Right ventricle myocardium inferior (tissue), 1 donor: ENCODE measurements at regions of chr18 and their contacts with region 1.

Region 1: GRCh38 chr18:63131106-63131958 is 188.2 kb downstream of the BCL2 start:
- DNase-seq: no peak
- ATAC-seq: peak; percentile 40

Region 2: DNA sequence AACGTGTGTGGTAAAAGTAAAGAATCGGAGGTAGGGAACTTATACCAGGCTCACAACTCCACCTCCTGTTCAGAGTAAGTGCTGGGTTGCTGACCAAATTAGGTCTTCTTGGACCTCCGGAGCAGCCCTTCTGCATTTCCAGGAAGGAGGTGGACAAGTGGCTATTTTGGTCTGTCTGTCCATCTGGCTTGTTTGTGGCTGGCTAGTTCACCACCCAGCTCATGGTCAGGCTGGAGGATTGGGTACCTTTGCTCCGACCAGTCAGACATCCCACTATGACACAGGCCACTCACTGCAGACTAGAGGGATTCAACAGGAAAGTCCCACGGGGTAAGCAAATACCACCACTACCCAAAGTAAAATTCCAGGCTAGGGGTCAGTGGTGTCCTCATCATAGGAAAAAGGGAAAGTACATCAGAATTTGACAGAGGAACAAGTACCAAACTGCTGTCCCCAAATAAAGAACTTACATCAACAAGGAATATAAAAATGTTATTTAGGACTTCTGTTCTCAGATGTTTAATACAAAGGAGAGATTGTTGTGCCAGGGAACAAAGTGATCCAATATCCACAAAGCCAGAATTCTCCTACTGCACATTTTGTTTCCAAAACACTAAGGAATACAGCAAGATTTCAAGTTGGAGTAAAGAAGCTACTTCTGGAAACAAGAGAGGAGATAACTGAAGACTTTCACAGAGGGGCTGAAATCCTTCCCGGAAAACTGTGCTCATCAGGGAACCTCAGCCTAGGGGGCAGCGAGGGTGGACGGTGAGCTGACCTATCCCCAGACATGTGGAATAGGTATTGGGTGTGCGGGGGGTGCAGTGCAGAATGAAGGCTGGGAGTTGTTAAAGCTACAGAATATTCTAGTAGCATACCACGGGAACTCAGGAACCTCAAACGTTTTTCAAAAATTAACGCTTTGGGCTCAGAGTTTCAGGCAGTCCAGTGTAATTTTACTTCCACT is 131.3 kb after region 1 on chr18:
- intact Hi-C with region 1: loop called (anchors 5 kb)
- DNase-seq: no peak
- ATAC-seq: peak; percentile 79

Region 3: GRCh38 chr18:63422087-63422809 is 290.9 kb after region 1 on chr18 and contains the start of gene VPS4B:
- intact Hi-C with region 1: loop called (anchors 5 kb)
- DNase-seq: peak; percentile 100
- ATAC-seq: peak; percentile 99
- total RNA-seq, gene VPS4B: 20.4 TPM

Region 4: GRCh38 chr18:63444567-63444966 is 313.2 kb after region 1 on chr18:
- intact Hi-C with region 1: loop called (anchors 5 kb)
- DNase-seq: no peak
- ATAC-seq: peak; percentile 75